GM13976 (cell line): ENCODE measurements at regions of chr4 and their contacts with region 1.

Region 1: DNA sequence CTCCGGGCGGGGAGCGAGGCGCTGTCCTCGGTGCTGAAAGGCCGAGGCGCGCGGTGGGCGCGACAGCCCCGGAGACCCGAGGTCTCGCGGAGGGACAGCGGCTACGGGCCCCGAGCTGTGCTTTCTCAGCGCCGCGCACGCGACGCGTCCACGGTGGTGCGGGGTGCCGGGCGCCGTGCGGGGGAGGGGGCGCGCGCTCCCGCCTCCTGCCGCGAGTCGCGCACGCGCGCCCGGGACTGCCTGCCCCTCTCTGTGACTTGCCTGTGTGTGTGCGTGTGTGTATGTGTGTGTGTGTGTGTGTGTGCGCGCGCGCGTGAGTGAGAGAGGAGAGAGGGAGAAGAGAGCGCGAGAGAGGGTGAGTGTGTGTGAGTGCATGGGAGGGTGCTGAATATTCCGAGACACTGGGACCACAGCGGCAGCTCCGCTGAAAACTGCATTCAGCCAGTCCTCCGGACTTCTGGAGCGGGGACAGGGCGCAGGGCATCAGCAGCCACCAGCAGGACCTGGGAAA is at the start of gene GRIA2:
- DNase-seq: peak; percentile 42
- CTCF ChIP-seq: no peak

Region 2: GRCh38 chr4:157978680-157979361 is 758.4 kb after region 1 on chr4:
- in situ Hi-C with region 1: loop called (anchors 10 kb)
- DNase-seq: peak; percentile 37
- CTCF ChIP-seq: peak; percentile 78